ENCODE measurements at regions of chr6 and their contacts with region 1.

Region 1: GRCh38 chr6:157314705-157315321 is 8.5 kb downstream of the TMEM242 start:
- DNase-seq: peak in 4 of 14 experiments; percentile 25 to 79 (median 73)
- ATAC-seq: peak; percentile 98
- H3K4me3 ChIP-seq: no peak overlapping the region
- H3K4me3 Mint-ChIP-seq: no peak overlapping the region
- H3K27ac ChIP-seq: no peak overlapping the region
- H3K27ac Mint-ChIP-seq: no peak overlapping the region
- H3K4me1 ChIP-seq: peaks cover 3% of the 10 kb centered on the region
- H3K4me1 Mint-ChIP-seq: peaks cover 15% of the 10 kb centered on the region
- H3K27me3 ChIP-seq: no peaks in the 10 kb centered on the region
- H3K27me3 Mint-ChIP-seq: no peaks in the 10 kb centered on the region
- CTCF ChIP-seq: peak; percentile 90

Region 2: GRCh38 chr6:157211603-157212455 is 103.0 kb before region 1 on chr6:
- CTCF ChIA-PET with region 1: no interaction called
- POLR2A ChIA-PET with region 1: no interaction called
- intact Hi-C with region 1: no loop called
- DNase-seq: no peak
- ATAC-seq: no peak
- H3K4me3 ChIP-seq: no peak overlapping the region
- H3K4me3 Mint-ChIP-seq: no peak overlapping the region
- H3K27ac ChIP-seq: no peak overlapping the region
- H3K27ac Mint-ChIP-seq: peak overlapping the region; percentile 1
- H3K4me1 ChIP-seq: no peaks in the 10 kb centered on the region
- H3K4me1 Mint-ChIP-seq: no peaks in the 10 kb centered on the region
- H3K27me3 ChIP-seq: no peaks in the 10 kb centered on the region
- H3K27me3 Mint-ChIP-seq: no peaks in the 10 kb centered on the region
- CTCF ChIP-seq: no peak

Region 3: GRCh38 chr6:157339432-157339831 is 24.6 kb after region 1 on chr6:
- CTCF ChIA-PET with region 1: interaction called, 10 read pairs
- POLR2A ChIA-PET with region 1: no interaction called
- intact Hi-C with region 1: no loop called
- DNase-seq: no peak
- ATAC-seq: no peak
- H3K4me3 ChIP-seq: no peak overlapping the region
- H3K4me3 Mint-ChIP-seq: no peak overlapping the region
- H3K27ac ChIP-seq: no peak overlapping the region
- H3K27ac Mint-ChIP-seq: no peak overlapping the region
- H3K4me1 ChIP-seq: no peaks in the 10 kb centered on the region
- H3K4me1 Mint-ChIP-seq: no peaks in the 10 kb centered on the region
- H3K27me3 ChIP-seq: peaks cover 3 to 14% of the 10 kb centered on the region in 2 experiments
- H3K27me3 Mint-ChIP-seq: peaks cover 71% of the 10 kb centered on the region
- CTCF ChIP-seq: no peak

Region 4: GRCh38 chr6:157597446-157598312 is 282.9 kb after region 1 on chr6:
- CTCF ChIA-PET with region 1: no interaction called
- POLR2A ChIA-PET with region 1: no interaction called
- intact Hi-C with region 1: loop called in 1 of 2 experiments (anchors 2 kb)
- DNase-seq: peak in 10 of 14 experiments; percentile 8 to 58 (median 21)
- ATAC-seq: no peak
- H3K4me3 ChIP-seq: no peak overlapping the region
- H3K4me3 Mint-ChIP-seq: no peak overlapping the region
- H3K27ac ChIP-seq: no peak overlapping the region
- H3K27ac Mint-ChIP-seq: no peak overlapping the region
- H3K4me1 ChIP-seq: peaks cover 5% of the 10 kb centered on the region
- H3K4me1 Mint-ChIP-seq: no peaks in the 10 kb centered on the region
- H3K27me3 ChIP-seq: no peaks in the 10 kb centered on the region
- H3K27me3 Mint-ChIP-seq: no peaks in the 10 kb centered on the region
- CTCF ChIP-seq: no peak

Region 5: DNA sequence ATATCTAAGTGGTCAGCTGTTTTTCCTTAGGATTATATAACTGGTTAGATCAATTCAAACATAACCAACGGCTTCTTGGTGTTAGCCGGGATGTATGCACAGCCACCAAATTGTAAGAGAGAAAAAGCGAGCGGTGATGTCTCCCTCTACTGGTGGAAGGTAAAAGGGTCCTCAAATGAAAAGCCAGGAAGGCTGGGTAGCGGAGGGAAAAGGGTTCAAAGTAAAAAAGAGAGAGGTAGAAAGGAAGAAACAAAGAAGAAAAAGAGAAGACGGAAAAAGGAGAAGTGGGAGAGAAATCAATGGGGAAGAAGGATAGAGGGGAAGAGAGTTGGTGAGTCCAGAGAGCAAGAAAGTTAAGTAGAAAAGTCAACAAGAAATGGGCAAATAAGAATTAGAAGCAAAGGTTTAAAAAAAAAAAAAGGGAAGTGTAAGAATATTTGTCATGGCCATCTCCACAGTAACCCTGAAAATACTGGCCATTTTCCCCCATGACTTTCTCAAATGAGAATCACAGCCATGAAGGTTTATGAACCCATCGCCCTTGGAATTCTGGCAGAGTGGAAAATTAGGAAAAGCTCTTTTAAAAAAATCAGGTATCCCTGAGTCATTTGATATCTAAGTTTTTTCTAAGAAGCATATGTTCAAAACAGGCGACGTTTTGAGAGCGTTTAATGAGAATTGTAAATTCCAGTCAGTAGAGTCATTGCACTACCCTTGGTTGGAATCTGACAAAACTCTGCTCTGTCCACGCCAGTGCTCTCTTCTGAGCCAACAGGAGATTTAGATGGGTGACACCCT is 352.6 kb after region 1 on chr6:
- CTCF ChIA-PET with region 1: interaction called, 8 read pairs
- POLR2A ChIA-PET with region 1: no interaction called
- intact Hi-C with region 1: loop called (anchors 1 kb)
- DNase-seq: peak; percentile 22 to 77 (median 40)
- ATAC-seq: peak; percentile 65
- H3K4me3 ChIP-seq: no peak overlapping the region
- H3K4me3 Mint-ChIP-seq: no peak overlapping the region
- H3K27ac ChIP-seq: no peak overlapping the region
- H3K27ac Mint-ChIP-seq: no peak overlapping the region
- H3K4me1 ChIP-seq: peaks cover 12% of the 10 kb centered on the region
- H3K4me1 Mint-ChIP-seq: peaks cover 28% of the 10 kb centered on the region
- H3K27me3 ChIP-seq: no peaks in the 10 kb centered on the region
- H3K27me3 Mint-ChIP-seq: no peaks in the 10 kb centered on the region
- CTCF ChIP-seq: peak; percentile 99

Region 6: DNA sequence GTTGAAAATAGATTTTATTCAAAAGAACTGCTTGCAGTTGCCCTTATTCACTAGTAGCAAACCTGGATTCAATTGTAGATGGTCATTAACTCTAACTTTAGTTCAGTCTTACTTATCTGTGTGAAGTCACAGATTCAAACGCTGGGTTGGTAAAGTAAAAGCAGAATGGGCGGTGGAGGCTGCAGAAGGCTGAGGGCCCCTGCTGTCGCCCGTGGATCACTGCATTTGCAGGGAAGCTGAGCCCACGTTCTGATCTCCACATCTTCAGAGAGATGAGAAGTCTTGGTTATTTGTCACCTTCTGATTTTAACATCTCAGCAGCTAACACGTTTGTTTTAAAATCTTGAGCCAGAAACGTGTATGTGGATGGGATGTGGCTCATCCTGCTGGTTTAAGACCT is 583.4 kb after region 1 on chr6:
- CTCF ChIA-PET with region 1: no interaction called
- POLR2A ChIA-PET with region 1: no interaction called
- intact Hi-C with region 1: loop called in 1 of 2 experiments (anchors 10 kb)
- DNase-seq: peak in 7 of 14 experiments; percentile 14 to 62 (median 39)
- ATAC-seq: peak; percentile 67
- H3K4me3 ChIP-seq: no peak overlapping the region
- H3K4me3 Mint-ChIP-seq: no peak overlapping the region
- H3K27ac ChIP-seq: no peak overlapping the region
- H3K27ac Mint-ChIP-seq: peak overlapping the region; percentile 72
- H3K4me1 ChIP-seq: peaks cover 3% of the 10 kb centered on the region
- H3K4me1 Mint-ChIP-seq: peaks cover 28% of the 10 kb centered on the region
- H3K27me3 ChIP-seq: no peaks in the 10 kb centered on the region
- H3K27me3 Mint-ChIP-seq: no peaks in the 10 kb centered on the region
- CTCF ChIP-seq: peak; percentile 31

Region 7: DNA sequence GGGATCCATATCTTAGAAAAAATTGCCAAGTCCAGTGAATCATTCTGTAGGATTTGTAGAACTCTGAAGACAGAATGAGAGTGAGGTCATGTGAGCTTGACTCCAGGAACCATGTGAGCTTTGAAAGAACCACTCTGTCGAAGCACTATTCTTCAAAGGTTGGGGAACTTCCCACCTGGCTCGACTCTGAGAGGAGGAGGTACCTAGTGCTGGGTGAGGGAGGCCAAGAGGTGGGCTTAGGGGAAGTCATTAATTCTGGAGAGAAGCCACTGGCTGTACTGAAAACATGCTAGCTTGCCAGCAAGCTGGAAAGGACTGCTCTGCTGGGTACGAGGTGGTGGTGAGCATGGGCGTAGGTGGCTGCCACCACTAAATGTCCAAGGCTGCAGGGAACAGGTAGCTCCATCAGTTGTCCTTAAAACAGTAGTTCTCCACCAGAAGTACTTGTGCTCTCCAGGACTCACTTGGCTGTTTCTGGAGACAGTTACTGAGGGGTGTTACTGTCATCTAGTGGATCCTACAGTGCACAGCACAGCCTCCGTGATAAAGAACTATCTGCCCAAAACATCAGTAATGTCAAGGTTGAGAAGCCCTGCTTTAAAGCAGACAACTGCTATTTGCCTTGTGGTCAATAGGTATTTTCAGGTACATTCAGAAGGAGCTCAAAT is 632.2 kb after region 1 on chr6:
- CTCF ChIA-PET with region 1: interaction called, 3 read pairs
- POLR2A ChIA-PET with region 1: no interaction called
- intact Hi-C with region 1: loop called (anchors 1 to 5 kb)
- DNase-seq: peak in 3 of 14 experiments; percentile 21 to 57 (median 54)
- ATAC-seq: peak; percentile 80
- H3K4me3 ChIP-seq: no peak overlapping the region
- H3K4me3 Mint-ChIP-seq: no peak overlapping the region
- H3K27ac ChIP-seq: no peak overlapping the region
- H3K27ac Mint-ChIP-seq: peak overlapping the region; percentile 21
- H3K4me1 ChIP-seq: no peaks in the 10 kb centered on the region
- H3K4me1 Mint-ChIP-seq: peaks cover 4% of the 10 kb centered on the region
- H3K27me3 ChIP-seq: no peaks in the 10 kb centered on the region
- H3K27me3 Mint-ChIP-seq: no peaks in the 10 kb centered on the region
- CTCF ChIP-seq: peak; percentile 36

Region 8: DNA sequence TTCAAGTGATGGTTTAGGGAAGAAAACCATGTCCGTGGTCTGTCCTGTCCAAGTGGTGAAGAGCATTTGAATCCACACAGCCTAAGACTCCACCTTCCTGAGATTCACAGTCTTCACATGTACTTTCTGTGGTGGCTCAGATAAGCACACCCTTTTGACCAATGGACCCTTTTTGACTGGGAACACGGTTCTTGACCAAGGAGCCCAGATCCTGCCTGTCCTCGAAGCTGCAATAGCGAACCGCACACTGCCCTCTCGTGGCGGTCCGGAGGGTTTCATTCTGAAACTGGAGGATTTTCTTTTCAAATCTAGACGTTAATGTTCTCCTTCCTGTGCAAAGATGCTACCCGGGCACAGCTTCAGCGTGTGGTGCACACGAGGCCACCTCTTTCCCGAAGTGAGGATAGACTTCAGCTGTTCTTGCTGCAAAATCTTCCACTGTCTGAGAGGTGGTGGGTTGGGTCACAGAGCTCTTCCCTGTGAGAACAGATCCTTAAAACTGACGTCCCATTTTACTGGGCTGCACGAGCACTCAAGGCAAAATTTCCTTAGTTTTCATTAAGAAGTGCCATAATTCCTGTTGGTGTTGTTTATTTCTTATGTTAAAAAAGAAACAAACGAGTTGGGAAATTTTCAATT is 757.4 kb after region 1 on chr6:
- CTCF ChIA-PET with region 1: interaction called, 6 read pairs
- POLR2A ChIA-PET with region 1: no interaction called
- intact Hi-C with region 1: loop called (anchors 2 to 10 kb)
- DNase-seq: peak; percentile 44 to 81 (median 62)
- ATAC-seq: peak; percentile 67
- H3K4me3 ChIP-seq: no peak overlapping the region
- H3K4me3 Mint-ChIP-seq: no peak overlapping the region
- H3K27ac ChIP-seq: no peak overlapping the region
- H3K27ac Mint-ChIP-seq: no peak overlapping the region
- H3K4me1 ChIP-seq: peaks cover 17% of the 10 kb centered on the region
- H3K4me1 Mint-ChIP-seq: peaks cover 6% of the 10 kb centered on the region
- H3K27me3 ChIP-seq: no peaks in the 10 kb centered on the region
- H3K27me3 Mint-ChIP-seq: no peaks in the 10 kb centered on the region
- CTCF ChIP-seq: peak; percentile 80

Measured in CD4-positive, alpha-beta T cell (primary cell).